SK-N-SH (cell line): ENCODE measurements at regions of chr11 and their contacts with region 1.

Region 1: DNA sequence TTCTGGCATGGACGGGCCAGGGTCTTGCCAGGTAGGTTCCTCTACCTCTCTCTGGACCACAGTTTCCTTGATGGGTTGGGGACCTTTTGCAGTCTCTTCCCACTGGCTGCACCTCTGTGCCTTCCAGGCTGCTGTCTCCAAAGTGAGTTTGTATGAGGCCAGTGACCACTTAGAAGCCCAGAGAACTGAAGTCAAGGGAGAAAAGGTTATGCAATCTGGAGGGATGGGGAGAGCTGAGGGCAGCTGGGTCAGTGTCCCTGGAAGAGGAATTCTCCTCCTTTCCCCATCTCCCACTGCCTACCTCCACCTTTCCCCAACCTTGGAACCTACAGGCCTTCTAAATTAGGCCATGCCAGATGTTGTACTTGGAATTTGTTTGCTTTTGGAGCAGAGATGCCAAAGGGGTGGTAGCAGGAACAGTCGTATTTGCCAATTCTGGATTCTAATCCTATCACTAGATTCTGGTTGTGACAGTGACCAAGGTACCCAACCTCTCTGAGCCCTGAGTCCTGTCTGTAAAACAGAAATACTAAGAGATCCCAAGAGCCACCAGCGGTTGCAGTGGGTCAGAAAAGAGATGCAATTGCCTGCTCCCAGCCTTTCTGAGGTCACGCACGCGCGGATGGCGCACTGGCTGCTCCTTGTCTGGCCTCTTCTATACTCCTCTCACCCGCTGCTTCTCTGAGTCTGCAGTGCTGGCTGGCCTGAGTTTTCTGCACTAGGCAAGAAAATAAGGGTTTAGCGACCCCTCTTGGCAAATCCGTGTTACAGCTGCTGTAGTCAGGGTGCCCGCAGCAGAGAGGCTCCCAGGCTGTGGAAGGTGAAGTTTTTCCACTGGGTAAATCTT is 10.7 kb upstream of the ACCSL start:
- DNase-seq: peak; percentile 80
- H3K4me3 ChIP-seq: peak overlapping the region in 1 of 2 experiments; percentile 35; a peak in 1 of 4 replicates
- H3K27ac ChIP-seq: peak overlapping the region in 1 of 2 experiments; percentile 55; a peak in 2 of 4 replicates
- H3K4me1 ChIP-seq: peaks cover 0 to 6% of the 10 kb centered on the region in 2 experiments; a peak in 1 of 4 replicates
- H3K27me3 ChIP-seq: no peaks in the 10 kb centered on the region; the same call in 1 of the 2 replicates
- CTCF ChIP-seq: peak; percentile 90
- EP300 ChIP-seq: peak in 1 of 2 experiments; percentile 52; a peak in 1 of 4 replicates
- RAD21 ChIP-seq: peak; percentile 99

Region 2: DNA sequence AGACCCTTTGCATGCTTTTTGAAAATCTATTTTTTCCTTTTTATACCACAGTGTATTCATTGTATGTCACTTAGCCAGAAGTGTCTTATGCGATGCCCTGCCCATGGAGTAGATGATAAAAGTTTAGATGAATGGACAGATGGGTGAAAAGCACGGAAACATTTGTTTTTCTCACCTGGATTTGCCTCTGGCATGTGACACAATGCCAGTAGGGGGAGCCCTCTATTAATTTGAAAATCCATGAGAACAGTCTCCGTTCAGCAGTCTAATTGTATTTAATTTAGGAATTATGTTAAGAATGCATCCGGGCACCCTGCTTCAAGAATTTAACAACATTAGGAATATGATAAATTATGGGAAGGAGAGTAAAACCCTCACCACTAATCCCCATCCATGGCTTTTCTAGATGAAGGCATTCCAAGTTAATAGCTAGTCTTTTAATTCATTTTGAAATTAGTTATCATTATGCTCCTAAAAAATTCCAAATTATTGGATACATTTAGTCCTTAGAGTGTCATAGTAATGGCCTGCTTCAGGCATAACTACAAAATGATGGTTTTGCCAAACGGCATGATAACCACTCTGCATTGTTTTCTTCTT is 211.7 kb before region 1 on chr11:
- CTCF ChIA-PET with region 1: interaction called, 11 read pairs
- POLR2A ChIA-PET with region 1: no interaction called
- DNase-seq: peak; percentile 46
- H3K4me3 ChIP-seq: no peak overlapping the region; a peak in 1 of 4 replicates
- H3K27ac ChIP-seq: no peak overlapping the region
- H3K4me1 ChIP-seq: peaks cover 0 to 5% of the 10 kb centered on the region in 2 experiments; a peak in 1 of 4 replicates
- H3K27me3 ChIP-seq: no peaks in the 10 kb centered on the region
- CTCF ChIP-seq: peak; percentile 97
- EP300 ChIP-seq: no peak
- RAD21 ChIP-seq: peak; percentile 76

Region 3: GRCh38 chr11:43880640-43881159 is 156.3 kb before region 1 on chr11 and contains the start of gene ALKBH3:
- CTCF ChIA-PET with region 1: interaction called, 18 read pairs
- POLR2A ChIA-PET with region 1: no interaction called
- DNase-seq: peak; percentile 89
- H3K4me3 ChIP-seq: peak within 1 kb of the TSS; percentile 96 to 99
- H3K27ac ChIP-seq: peak within 1 kb of the TSS in 1 of 2 experiments; percentile 28; a peak in 1 of 4 replicates
- H3K4me1 ChIP-seq: peaks cover 11 to 15% of the 10 kb centered on the region in 2 experiments; a peak in 3 of 4 replicates
- H3K27me3 ChIP-seq: peaks cover 12% of the 10 kb centered on the region; the same call in 1 of the 2 replicates
- CTCF ChIP-seq: no peak
- EP300 ChIP-seq: peak in 1 of 2 experiments; percentile 27; a peak in 1 of 4 replicates
- RAD21 ChIP-seq: no peak
- polyA plus RNA-seq, gene ALKBH3: 27.0 and 34.2 TPM in 2 replicates

Region 4: DNA sequence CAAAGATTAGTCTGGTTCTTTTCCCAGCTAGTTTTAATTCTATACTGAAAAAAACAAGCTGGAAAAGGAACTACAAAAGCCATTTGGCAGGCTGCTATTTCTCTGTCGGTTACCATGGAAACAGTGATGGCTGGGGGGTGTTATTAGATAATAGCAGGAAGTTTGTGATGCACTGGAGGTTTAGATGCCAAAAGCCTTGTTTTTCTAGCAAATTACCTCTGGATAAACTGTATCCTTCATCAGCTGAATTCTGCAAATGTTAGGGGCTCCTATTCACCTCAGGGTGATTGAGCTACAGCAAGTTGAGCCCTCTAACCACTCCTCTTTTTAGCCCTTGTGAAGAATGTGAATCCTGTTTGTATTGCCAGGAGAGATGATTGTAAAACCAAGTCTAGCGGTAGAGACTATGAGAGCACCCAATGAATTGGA is 131.2 kb before region 1 on chr11:
- CTCF ChIA-PET with region 1: interaction called, 11 read pairs
- POLR2A ChIA-PET with region 1: no interaction called
- DNase-seq: peak; percentile 73
- H3K4me3 ChIP-seq: no peak overlapping the region
- H3K27ac ChIP-seq: peak overlapping the region; percentile 51 to 100
- H3K4me1 ChIP-seq: peaks cover 0 to 50% of the 10 kb centered on the region in 2 experiments; a peak in 2 of 4 replicates
- H3K27me3 ChIP-seq: no peaks in the 10 kb centered on the region
- CTCF ChIP-seq: no peak
- EP300 ChIP-seq: peak in 1 of 2 experiments; percentile 96; a peak in 2 of 4 replicates
- RAD21 ChIP-seq: peak; percentile 14; the same call in 1 of the 2 replicates

Region 5: DNA sequence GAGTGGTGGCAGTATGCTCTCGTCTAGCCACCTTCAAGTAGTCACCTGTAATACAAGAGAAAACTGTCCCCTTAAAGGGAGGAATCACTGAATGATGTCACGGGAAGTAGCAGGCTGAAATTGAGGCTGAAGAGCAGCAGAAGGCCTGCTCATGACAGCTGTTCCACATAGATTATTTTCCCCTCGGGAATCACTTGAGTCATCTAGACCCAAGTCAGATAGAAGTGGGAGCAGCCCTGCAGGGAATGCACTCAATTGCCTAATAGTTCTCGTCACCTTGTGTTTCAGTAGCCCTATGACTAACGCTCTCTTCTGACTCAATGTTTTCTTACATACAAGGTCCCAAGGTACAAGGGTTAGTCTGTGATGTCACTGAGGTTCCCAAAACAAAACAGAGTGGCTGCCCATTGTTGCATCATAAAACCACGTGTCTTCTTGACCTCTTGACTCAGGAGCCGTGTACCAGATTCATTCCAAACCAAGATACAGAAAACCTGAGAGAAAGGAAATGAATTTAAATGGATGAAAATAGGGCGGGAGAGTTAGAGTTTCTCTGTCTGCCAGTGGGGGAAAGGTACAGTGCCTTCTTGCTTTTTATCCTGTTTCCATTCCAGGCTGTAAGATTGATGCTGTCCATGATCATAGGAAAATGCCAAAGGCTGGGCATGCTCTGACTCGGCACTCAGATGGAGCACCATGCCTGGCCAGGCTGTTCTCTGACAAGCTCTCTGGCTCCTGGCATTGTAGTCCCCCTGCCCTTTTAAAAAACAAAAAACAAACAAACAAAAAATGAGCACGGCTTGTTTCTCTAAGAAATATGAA is 116.2 kb before region 1 on chr11:
- CTCF ChIA-PET with region 1: interaction called, 29 read pairs
- POLR2A ChIA-PET with region 1: no interaction called
- DNase-seq: no peak
- H3K4me3 ChIP-seq: no peak overlapping the region
- H3K27ac ChIP-seq: peak overlapping the region; percentile 65 to 100
- H3K4me1 ChIP-seq: peaks cover 4 to 84% of the 10 kb centered on the region in 2 experiments; a peak in 3 of 4 replicates
- H3K27me3 ChIP-seq: no peaks in the 10 kb centered on the region
- CTCF ChIP-seq: no peak
- EP300 ChIP-seq: no peak
- RAD21 ChIP-seq: no peak

Region 6: DNA sequence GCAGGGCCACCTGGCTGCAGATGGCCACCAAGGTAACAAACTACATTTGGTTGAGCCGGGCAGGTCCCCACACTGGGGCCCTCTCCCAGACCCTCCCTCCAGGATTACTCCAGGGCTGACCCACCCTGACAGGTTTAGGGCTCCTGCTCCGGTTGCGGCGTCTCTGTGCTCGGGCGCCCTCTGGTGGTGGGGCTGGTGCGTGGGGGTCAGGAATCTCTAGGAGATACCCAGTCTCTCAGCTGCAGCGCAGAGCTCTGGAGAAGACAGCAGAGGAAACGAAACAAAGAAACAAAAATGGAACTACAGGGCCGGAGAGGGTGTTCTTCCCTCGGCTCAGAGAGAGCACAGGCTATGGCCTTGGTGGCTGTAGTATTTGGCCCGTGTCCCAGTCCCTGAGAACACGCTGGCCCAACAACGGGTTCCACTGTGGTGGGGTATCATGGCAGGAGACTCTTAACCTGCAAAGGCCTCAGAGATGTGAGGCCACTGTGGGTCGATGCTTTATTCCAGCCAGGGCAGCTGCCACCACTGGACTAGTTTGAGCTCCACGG is 92.2 kb before region 1 on chr11:
- CTCF ChIA-PET with region 1: interaction called, 151 read pairs
- POLR2A ChIA-PET with region 1: interaction called, 16 read pairs
- DNase-seq: peak; percentile 72
- H3K4me3 ChIP-seq: peak overlapping the region; percentile 26 to 53; a peak in 3 of 4 replicates
- H3K27ac ChIP-seq: peak overlapping the region in 1 of 2 experiments; percentile 93; a peak in 2 of 4 replicates
- H3K4me1 ChIP-seq: peaks cover 5 to 46% of the 10 kb centered on the region in 2 experiments; a peak in 3 of 4 replicates
- H3K27me3 ChIP-seq: peaks cover 62% of the 10 kb centered on the region
- CTCF ChIP-seq: peak; percentile 74
- EP300 ChIP-seq: no peak
- RAD21 ChIP-seq: peak; percentile 62

Region 7: GRCh38 chr11:43962383-43963278 is 74.4 kb before region 1 on chr11:
- CTCF ChIA-PET with region 1: interaction called, 11 read pairs
- POLR2A ChIA-PET with region 1: no interaction called
- DNase-seq: peak; percentile 60
- H3K4me3 ChIP-seq: peak overlapping the region in 1 of 2 experiments; percentile 9; a peak in 2 of 4 replicates
- H3K27ac ChIP-seq: peak overlapping the region in 1 of 2 experiments; percentile 90; a peak in 2 of 4 replicates
- H3K4me1 ChIP-seq: peaks cover 0 to 28% of the 10 kb centered on the region in 2 experiments; a peak in 3 of 4 replicates
- H3K27me3 ChIP-seq: no peaks in the 10 kb centered on the region
- CTCF ChIP-seq: no peak
- EP300 ChIP-seq: peak in 1 of 2 experiments; percentile 87; a peak in 2 of 4 replicates
- RAD21 ChIP-seq: 0 out of 2 replicates have a peak, but pooled peaks have one; percentile 16

Region 8: GRCh38 chr11:44143943-44144909 is 107.2 kb after region 1 on chr11:
- CTCF ChIA-PET with region 1: no interaction called
- POLR2A ChIA-PET with region 1: no interaction called
- DNase-seq: no peak
- H3K4me3 ChIP-seq: no peak overlapping the region
- H3K27ac ChIP-seq: no peak overlapping the region
- H3K4me1 ChIP-seq: peaks cover 8 to 20% of the 10 kb centered on the region in 2 experiments; a peak in 2 of 4 replicates
- H3K27me3 ChIP-seq: no peaks in the 10 kb centered on the region
- CTCF ChIP-seq: no peak
- EP300 ChIP-seq: no peak
- RAD21 ChIP-seq: no peak